Activated B cell treated with CpG ODN at 0.5 μM for 24 hours (primary cell): ENCODE measurements at regions of chr13 and their contacts with region 1.

Region 1: GRCh38 chr13:76473552-76474134 is 412.6 kb downstream of the KCTD12 start:
- DNase-seq: no peak
- ATAC-seq: peak; percentile 71
- H3K4me3 Mint-ChIP-seq: no peak overlapping the region
- H3K27ac Mint-ChIP-seq: no peak overlapping the region
- H3K4me1 Mint-ChIP-seq: no peaks in the 10 kb centered on the region
- H3K27me3 Mint-ChIP-seq: peaks cover 2% of the 10 kb centered on the region
- CTCF ChIP-seq: peak; percentile 24

Region 2: DNA sequence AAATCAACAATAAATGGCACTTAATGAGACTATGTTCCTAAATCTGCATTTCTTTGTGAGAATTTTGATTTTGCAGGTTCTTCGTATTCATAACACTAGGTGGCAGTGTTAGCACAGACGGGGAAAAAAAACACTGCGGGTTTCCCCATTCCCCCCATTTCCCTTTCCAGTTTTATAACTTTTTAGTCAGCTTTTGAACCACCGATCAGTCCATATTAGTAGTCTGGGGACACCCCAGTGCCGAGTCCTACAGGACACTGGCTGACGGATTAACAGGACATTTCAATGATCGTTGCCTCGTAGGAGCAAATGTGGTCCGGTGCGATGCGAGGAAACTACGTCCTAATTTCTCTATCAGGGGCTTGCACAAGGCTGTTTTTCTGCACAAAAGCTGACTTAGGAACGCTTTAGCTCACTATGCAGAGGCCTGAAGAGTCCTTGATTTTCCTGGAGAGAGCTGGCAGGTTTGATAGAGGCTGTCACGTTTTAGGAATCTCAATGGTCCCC is 603.2 kb before region 1 on chr13:
- CTCF ChIA-PET with region 1: interaction called, 16 read pairs
- POLR2A ChIA-PET with region 1: no interaction called
- intact Hi-C with region 1: loop called (anchors 1 kb)
- DNase-seq: no peak
- ATAC-seq: no peak
- H3K4me3 Mint-ChIP-seq: peak overlapping the region; percentile 25
- H3K27ac Mint-ChIP-seq: no peak overlapping the region
- H3K4me1 Mint-ChIP-seq: peaks cover 2% of the 10 kb centered on the region
- H3K27me3 Mint-ChIP-seq: peaks cover 13% of the 10 kb centered on the region
- CTCF ChIP-seq: no peak

Region 3: DNA sequence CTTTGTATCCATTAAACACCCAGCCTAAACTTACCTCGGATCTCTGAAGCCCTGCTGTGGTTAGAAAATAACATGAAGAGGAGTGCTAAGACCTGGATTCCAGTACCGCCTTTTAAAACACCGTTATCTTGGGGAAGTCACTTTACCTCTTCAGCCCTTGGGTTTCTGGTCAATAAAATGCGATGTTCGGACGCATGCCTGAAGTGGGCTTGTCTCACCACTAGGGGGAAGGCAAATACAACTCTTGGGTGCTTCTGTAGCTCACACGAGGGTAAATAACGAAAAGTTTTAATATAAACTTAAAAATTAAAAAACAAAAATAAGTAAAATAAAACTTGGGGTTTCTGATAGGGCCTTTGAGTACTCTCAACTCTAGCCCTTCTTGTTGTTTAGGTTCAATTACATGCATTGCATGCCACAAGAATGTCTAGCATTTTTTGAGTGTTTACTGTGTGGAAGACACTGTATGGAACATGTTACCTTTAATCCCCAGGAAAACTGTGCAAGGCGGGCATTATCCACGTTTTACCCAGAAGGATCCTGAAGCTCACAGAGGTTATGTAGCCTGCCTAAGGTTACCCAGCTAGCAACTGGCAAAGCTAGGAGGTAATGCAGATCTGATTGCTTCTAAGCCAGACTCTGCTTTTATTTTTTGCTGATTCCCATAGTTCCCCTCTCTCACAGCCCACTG is 597.1 kb before region 1 on chr13:
- CTCF ChIA-PET with region 1: interaction called, 16 read pairs
- POLR2A ChIA-PET with region 1: no interaction called
- intact Hi-C with region 1: loop called (anchors 1 kb)
- DNase-seq: no peak
- ATAC-seq: peak; percentile 81
- H3K4me3 Mint-ChIP-seq: no peak overlapping the region
- H3K27ac Mint-ChIP-seq: no peak overlapping the region
- H3K4me1 Mint-ChIP-seq: peaks cover 2% of the 10 kb centered on the region
- H3K27me3 Mint-ChIP-seq: peaks cover 13% of the 10 kb centered on the region
- CTCF ChIP-seq: no peak

Region 4: DNA sequence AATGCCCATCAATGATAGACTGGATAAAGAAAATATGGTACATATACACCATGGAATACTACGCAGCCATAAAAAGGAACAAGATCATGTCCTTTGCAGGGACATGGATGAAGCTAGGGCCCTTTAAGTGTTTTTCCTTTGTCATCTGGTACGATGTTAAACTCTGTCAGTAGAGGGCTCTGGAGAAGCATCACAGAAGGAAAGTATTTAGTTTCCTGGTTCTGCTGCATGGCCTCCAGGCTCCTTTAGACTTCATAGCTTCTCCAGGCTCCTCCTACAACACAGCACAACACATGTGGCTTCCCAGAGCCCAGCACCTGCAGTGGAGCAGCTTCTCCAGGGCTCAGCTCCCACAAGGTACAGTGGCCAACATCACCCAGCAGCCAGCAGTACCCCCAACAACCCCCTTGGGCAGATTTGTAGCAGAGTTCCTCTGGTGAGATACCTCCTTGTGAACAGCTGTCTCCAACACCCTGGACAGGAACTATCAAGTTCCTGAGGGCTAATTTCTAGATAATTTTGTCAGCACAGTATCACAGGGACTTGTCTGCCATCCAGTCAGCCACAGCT is 349.1 kb after region 1 on chr13:
- CTCF ChIA-PET with region 1: no interaction called
- POLR2A ChIA-PET with region 1: no interaction called
- intact Hi-C with region 1: no loop called
- DNase-seq: no peak
- ATAC-seq: no peak
- H3K4me3 Mint-ChIP-seq: no peak overlapping the region
- H3K27ac Mint-ChIP-seq: no peak overlapping the region
- H3K4me1 Mint-ChIP-seq: no peaks in the 10 kb centered on the region
- H3K27me3 Mint-ChIP-seq: peaks cover 2% of the 10 kb centered on the region
- CTCF ChIP-seq: no peak